Dorsolateral prefrontal cortex (tissue), 120 donors: ENCODE measurements at regions of chr17 and their contacts with region 1.

Region 1: GRCh38 chr17:81238817-81239600 is at the starts of genes NDUFAF8 and TEPSIN:
- DNase-seq: peak; percentile 93 to 99 (median 99)
- H3K4me3 ChIP-seq: peak within 1 kb of the TSS; percentile 55 to 100 (median 96)
- H3K27ac ChIP-seq: peak within 1 kb of the TSS in 52 of 59 donors; percentile 24 to 90 (median 80)
- H3K27me3 ChIP-seq: no peaks in the 10 kb centered on the region
- CTCF ChIP-seq: peak in 42 of 56 donors; percentile 11 to 67 (median 34)
- total RNA-seq, gene NDUFAF8: 23.8 to 70.9 (median 46.9) TPM
- total RNA-seq, gene TEPSIN: 12.8 to 46.5 (median 27.3) TPM

Region 2: GRCh38 chr17:80991645-80992076 is 247.3 kb before region 1 on chr17 and contains the start of gene CHMP6:
- intact Hi-C with region 1: loop called (anchors 5 kb)
- DNase-seq: peak in 8 of 10 donors; percentile 52 to 83 (median 66)
- H3K4me3 ChIP-seq: peak within 1 kb of the TSS; percentile 57 to 99 (median 83)
- H3K27ac ChIP-seq: peak within 1 kb of the TSS in 40 of 59 donors; percentile 7 to 88 (median 62)
- H3K27me3 ChIP-seq: no peaks in the 10 kb centered on the region
- CTCF ChIP-seq: peak in 54 of 56 donors; percentile 7 to 84 (median 55)
- total RNA-seq, gene CHMP6: 15.4 to 33.4 (median 22.0) TPM

Region 3: DNA sequence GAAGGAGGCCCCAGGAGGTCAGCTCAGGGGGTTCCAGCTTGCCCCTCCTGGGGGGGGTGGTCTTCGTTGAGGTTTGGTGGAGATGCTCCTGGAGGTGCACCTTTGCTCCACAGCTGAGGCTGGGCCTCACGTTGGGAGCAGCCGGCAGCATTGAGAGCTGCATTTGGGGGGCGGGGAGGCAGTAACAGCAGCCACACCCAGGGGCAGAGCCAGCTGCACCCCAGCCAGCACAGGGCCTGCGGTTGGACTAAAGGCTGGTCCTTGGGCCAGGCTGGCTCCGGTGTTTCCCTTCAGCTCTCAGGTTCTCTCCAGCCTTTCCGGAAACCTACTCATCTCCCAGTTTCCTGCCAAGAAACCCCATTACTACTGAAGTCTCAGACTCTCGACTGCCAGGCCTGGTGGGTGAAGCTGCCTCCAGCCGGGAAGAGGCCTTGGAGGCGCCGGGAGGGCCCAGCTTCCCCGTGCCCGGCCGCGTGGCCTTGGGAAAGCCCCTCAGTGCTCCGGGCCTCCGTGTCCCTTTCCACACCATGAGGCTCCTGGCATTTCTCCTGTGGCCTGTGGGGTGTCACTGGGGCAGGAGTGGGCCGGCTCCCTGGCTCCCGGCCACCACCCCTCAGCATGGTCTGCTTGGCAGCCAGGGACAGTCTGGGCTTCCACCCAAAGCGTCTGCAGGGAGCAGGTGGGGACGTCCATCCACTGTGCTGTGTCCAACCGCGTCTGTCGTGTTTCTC is 218.1 kb before region 1 on chr17:
- intact Hi-C with region 1: loop called in 1 of 2 experiments (anchors 5 kb)
- DNase-seq: peak in 3 of 10 donors; percentile 63 to 91 (median 68)
- H3K4me3 ChIP-seq: no peak overlapping the region
- H3K27ac ChIP-seq: peak overlapping the region in 12 of 59 donors; percentile 6 to 63 (median 50)
- H3K27me3 ChIP-seq: no peaks in the 10 kb centered on the region
- CTCF ChIP-seq: no peak

Region 4: DNA sequence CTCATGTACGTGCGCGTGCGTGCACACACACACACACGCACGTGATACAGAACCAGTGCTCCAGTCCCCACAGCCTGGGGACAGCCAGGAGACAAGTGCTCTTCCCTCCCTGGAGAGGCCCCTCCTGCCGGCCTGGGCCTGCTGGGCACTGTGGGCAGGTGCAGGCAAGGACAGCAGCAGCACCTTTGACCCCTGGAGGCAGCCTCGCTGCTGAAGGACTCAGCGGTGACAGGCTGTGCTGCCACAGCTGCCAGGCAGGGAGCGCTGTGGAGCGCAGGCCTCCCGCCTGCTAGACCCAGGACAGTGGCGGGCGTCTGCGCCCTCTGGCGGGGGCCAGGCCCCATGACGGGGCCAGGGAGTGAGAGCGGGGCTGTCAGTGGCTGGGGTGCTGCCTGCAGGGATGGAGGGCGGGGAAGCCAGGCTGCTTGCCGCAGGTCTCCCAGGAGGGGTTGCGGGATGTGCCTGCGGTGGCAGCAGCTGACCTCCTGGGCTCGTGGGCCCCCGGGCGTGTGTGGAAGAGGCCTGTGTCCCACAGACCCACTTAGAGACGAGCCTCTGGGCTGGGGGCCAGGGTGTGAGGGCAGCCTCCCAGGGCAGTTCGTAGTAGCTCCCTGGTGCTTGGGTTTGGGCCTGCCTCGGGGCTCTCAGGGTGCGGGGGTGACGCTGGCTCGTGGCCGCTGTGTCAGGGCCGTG is 137.2 kb before region 1 on chr17:
- intact Hi-C with region 1: loop called in 1 of 2 experiments (anchors 2 kb)
- DNase-seq: peak; percentile 68 to 89 (median 77)
- H3K4me3 ChIP-seq: peak overlapping the region in 4 of 59 donors; percentile 1 to 30 (median 10)
- H3K27ac ChIP-seq: peak overlapping the region in 41 of 59 donors; percentile 6 to 84 (median 55)
- H3K27me3 ChIP-seq: no peaks in the 10 kb centered on the region
- CTCF ChIP-seq: peak; percentile 92 to 100 (median 100)

Region 5: GRCh38 chr17:81142301-81143199 is 96.5 kb before region 1 on chr17:
- intact Hi-C with region 1: loop called (anchors 2 to 5 kb)
- DNase-seq: peak; percentile 79 to 90 (median 84)
- H3K4me3 ChIP-seq: peak overlapping the region in 7 of 59 donors; percentile 0 to 31 (median 6)
- H3K27ac ChIP-seq: peak overlapping the region in 58 of 59 donors; percentile 53 to 96 (median 86)
- H3K27me3 ChIP-seq: no peaks in the 10 kb centered on the region
- CTCF ChIP-seq: peak in 55 of 56 donors; percentile 49 to 89 (median 74)

Region 6: GRCh38 chr17:81222906-81223761 is 15.9 kb before region 1 on chr17 and contains the start of gene CEP131:
- intact Hi-C with region 1: loop called in 1 of 2 experiments (anchors 1 kb)
- DNase-seq: peak; percentile 96 to 99 (median 98)
- H3K4me3 ChIP-seq: peak within 1 kb of the TSS; percentile 60 to 93 (median 82)
- H3K27ac ChIP-seq: peak within 1 kb of the TSS in 20 of 59 donors; percentile 3 to 59 (median 30)
- H3K27me3 ChIP-seq: no peaks in the 10 kb centered on the region
- CTCF ChIP-seq: peak in 4 of 56 donors; percentile 10 to 20 (median 15)
- total RNA-seq, gene CEP131: 6.0 to 20.7 (median 9.3) TPM